IMR-90 (cell line): ENCODE measurements at regions of chr15 and their contacts with region 1.

Region 1: GRCh38 chr15:26325495-26325894 is 447.4 kb downstream of the GABRB3 start:
- DNase-seq: no peak
- ATAC-seq: no peak
- H3K4me3 ChIP-seq: no peak overlapping the region
- H3K27ac ChIP-seq: no peak overlapping the region
- H3K4me1 ChIP-seq: no peaks in the 10 kb centered on the region
- H3K27me3 ChIP-seq: no peaks in the 10 kb centered on the region
- CTCF ChIP-seq: no peak
- POLR2A ChIP-seq: no peak
- RAD21 ChIP-seq: no peak

Region 2: GRCh38 chr15:25208735-25209134 is 1116.8 kb before region 1 on chr15:
- CTCF ChIA-PET with region 1: no interaction called
- POLR2A ChIA-PET with region 1: no interaction called
- dilution Hi-C with region 1: no loop called
- in situ Hi-C with region 1: loop called (anchors 25 kb)
- intact Hi-C with region 1: no loop called
- DNase-seq: no peak
- ATAC-seq: no peak
- H3K4me3 ChIP-seq: no peak overlapping the region
- H3K27ac ChIP-seq: no peak overlapping the region
- H3K4me1 ChIP-seq: no peaks in the 10 kb centered on the region
- H3K27me3 ChIP-seq: no peaks in the 10 kb centered on the region
- CTCF ChIP-seq: no peak
- POLR2A ChIP-seq: no peak
- RAD21 ChIP-seq: no peak

Region 3: GRCh38 chr15:26280283-26280682 is 45.2 kb before region 1 on chr15:
- CTCF ChIA-PET with region 1: no interaction called
- POLR2A ChIA-PET with region 1: no interaction called
- dilution Hi-C with region 1: no loop called
- in situ Hi-C with region 1: loop called (anchors 10 kb)
- intact Hi-C with region 1: no loop called
- DNase-seq: no peak
- ATAC-seq: no peak
- H3K4me3 ChIP-seq: no peak overlapping the region
- H3K27ac ChIP-seq: no peak overlapping the region
- H3K4me1 ChIP-seq: no peaks in the 10 kb centered on the region
- H3K27me3 ChIP-seq: no peaks in the 10 kb centered on the region
- CTCF ChIP-seq: no peak
- POLR2A ChIP-seq: no peak
- RAD21 ChIP-seq: no peak

Region 4: GRCh38 chr15:26355472-26356074 is 30.1 kb after region 1 on chr15:
- CTCF ChIA-PET with region 1: no interaction called
- POLR2A ChIA-PET with region 1: no interaction called
- dilution Hi-C with region 1: no loop called
- in situ Hi-C with region 1: no loop called
- intact Hi-C with region 1: no loop called
- DNase-seq: no peak
- ATAC-seq: no peak
- H3K4me3 ChIP-seq: no peak overlapping the region
- H3K27ac ChIP-seq: no peak overlapping the region
- H3K4me1 ChIP-seq: no peaks in the 10 kb centered on the region
- H3K27me3 ChIP-seq: no peaks in the 10 kb centered on the region
- CTCF ChIP-seq: no peak
- POLR2A ChIP-seq: no peak
- RAD21 ChIP-seq: no peak

Region 5: GRCh38 chr15:26475554-26475953 is 150.1 kb after region 1 on chr15:
- CTCF ChIA-PET with region 1: no interaction called
- POLR2A ChIA-PET with region 1: no interaction called
- dilution Hi-C with region 1: no loop called
- in situ Hi-C with region 1: no loop called
- intact Hi-C with region 1: no loop called
- DNase-seq: no peak
- ATAC-seq: no peak
- H3K4me3 ChIP-seq: no peak overlapping the region
- H3K27ac ChIP-seq: no peak overlapping the region
- H3K4me1 ChIP-seq: no peaks in the 10 kb centered on the region
- H3K27me3 ChIP-seq: no peaks in the 10 kb centered on the region
- CTCF ChIP-seq: no peak
- POLR2A ChIP-seq: no peak
- RAD21 ChIP-seq: no peak

Region 6: GRCh38 chr15:26773069-26773877 is 447.8 kb after region 1 on chr15:
- CTCF ChIA-PET with region 1: no interaction called
- POLR2A ChIA-PET with region 1: no interaction called
- dilution Hi-C with region 1: no loop called
- in situ Hi-C with region 1: loop called (anchors 25 kb)
- intact Hi-C with region 1: no loop called
- DNase-seq: no peak
- ATAC-seq: peak; percentile 79
- H3K4me3 ChIP-seq: peak overlapping the region; percentile 20; the same call in 1 of the 2 replicates
- H3K27ac ChIP-seq: no peak overlapping the region
- H3K4me1 ChIP-seq: no peaks in the 10 kb centered on the region
- H3K27me3 ChIP-seq: peaks cover 13% of the 10 kb centered on the region; the same call in 1 of the 2 replicates
- CTCF ChIP-seq: no peak
- POLR2A ChIP-seq: no peak
- RAD21 ChIP-seq: no peak